ENCODE measurements at regions of chr14 and their contacts with region 1.

Region 1: GRCh38 chr14:50532502-50533240 is at the start of gene MAP4K5:
- DNase-seq: peak; percentile 82
- H3K4me3 Mint-ChIP-seq: peak within 1 kb of the TSS; percentile 88
- H3K27ac Mint-ChIP-seq: peak within 1 kb of the TSS; percentile 51
- H3K4me1 Mint-ChIP-seq: peaks cover 30% of the 10 kb centered on the region
- H3K27me3 Mint-ChIP-seq: peaks cover 34% of the 10 kb centered on the region
- total RNA-seq, gene MAP4K5: 21.0 and 23.1 TPM in 2 replicates

Region 2: DNA sequence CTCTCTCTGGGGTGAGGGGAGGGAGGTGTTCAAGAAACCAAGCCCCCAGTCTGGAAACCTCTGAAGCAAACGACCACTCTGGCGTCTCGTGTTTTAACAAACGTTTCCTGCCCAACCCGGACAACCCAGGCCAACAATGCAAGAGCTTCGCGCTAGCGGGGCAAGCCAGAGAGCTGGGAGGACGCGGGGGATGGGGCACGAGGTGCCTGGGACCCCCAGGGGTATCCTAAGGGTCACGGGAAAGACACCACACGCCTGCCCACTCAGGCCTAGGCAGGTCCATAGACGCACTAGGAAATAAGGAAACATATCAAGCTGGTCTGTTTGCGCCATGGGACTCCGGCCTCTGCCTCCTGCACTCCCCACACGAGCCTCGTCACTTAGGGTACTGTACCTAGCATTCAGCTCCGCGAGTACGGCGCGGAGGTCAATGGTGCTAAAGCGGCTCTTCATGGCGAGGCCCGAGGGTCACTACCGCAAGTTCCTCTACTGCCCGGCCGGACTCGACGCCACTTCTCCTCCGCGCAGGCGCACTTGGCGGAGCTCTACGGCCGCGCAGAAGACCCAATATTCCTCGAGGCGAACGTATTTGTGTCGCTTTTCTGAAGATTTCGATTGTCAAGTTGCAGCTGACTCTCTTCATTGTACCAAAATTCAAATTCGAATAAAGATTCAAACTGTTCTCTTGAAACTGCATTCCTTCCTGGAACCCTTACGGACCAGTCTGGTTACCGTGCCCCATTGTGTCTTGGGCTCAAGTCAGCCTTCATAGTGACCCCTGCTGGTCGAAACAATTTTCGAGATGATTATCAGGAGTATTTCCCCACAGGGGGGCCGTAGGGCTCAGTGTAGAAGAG is 680.1 kb before region 1 on chr14 and contains the start of gene NEMF:
- intact Hi-C with region 1: loop called (anchors 5 kb)
- DNase-seq: peak; percentile 76
- H3K4me3 Mint-ChIP-seq: peak within 1 kb of the TSS; percentile 92
- H3K27ac Mint-ChIP-seq: peak within 1 kb of the TSS; percentile 96
- H3K4me1 Mint-ChIP-seq: peaks cover 34% of the 10 kb centered on the region
- H3K27me3 Mint-ChIP-seq: no peaks in the 10 kb centered on the region
- total RNA-seq, gene NEMF: 75.0 and 81.0 TPM in 2 replicates

Region 3: GRCh38 chr14:50342221-50343078 is 190.2 kb before region 1 on chr14:
- intact Hi-C with region 1: loop called (anchors 1 kb)
- DNase-seq: peak; percentile 33
- H3K4me3 Mint-ChIP-seq: no peak overlapping the region
- H3K27ac Mint-ChIP-seq: peak overlapping the region; percentile 44
- H3K4me1 Mint-ChIP-seq: peaks cover 27% of the 10 kb centered on the region
- H3K27me3 Mint-ChIP-seq: peaks cover 11% of the 10 kb centered on the region

Measured in activated T-helper 2 cell treated with anti-CD3 and anti-CD28 coated beads, Interferon-gamma antibody, Interleukin-2, Interleukin-4, amounts not matched to agents 10 μg/mL and 5 μg/mL and 100 μg/mL, durations not matched to agents 14 hours and 24 hours and 36 hours (primary cell).